ENCODE measurements at regions of chr9 and their contacts with region 1.

Region 1: DNA sequence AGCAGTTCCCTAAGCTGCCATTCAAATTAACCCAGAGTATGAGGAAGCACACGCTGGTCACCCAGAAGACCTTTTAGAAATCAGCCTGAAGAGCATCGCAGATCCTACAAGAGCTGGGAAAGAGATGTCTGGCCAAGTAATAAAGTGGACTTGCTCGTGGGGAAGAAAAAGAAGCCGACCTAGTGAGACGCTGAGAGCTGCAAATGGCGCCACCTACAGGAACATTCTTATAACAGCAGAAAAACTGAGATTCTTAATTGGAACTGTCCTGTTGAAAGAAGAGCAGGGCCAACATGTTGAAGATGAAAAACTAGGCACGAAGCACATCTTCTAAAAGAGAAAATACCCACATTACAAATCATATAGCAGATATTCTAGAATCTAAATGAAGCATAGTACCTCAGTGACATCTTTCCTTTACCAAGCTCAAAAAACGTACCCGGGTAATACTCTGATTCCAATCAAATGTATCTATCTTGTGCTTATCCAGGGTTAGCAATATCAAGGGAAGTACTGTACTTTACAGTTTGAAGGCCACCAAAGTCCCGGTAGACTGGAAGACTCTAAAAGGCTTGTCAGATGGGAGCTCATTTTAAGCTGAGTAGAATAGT is 3.9 kb upstream of the GNAQ start:
- DNase-seq: peak; percentile 18 to 89 (median 40)
- ATAC-seq: no peak
- H3K4me3 ChIP-seq: no peak overlapping the region
- H3K4me3 Mint-ChIP-seq: peak overlapping the region; percentile 45
- H3K27ac ChIP-seq: no peak overlapping the region
- H3K27ac Mint-ChIP-seq: peak overlapping the region; percentile 88
- H3K4me1 ChIP-seq: peaks cover 23% of the 10 kb centered on the region
- H3K4me1 Mint-ChIP-seq: peaks cover 36% of the 10 kb centered on the region
- H3K27me3 ChIP-seq: no peaks in the 10 kb centered on the region
- H3K27me3 Mint-ChIP-seq: no peaks in the 10 kb centered on the region
- CTCF ChIP-seq: peak; percentile 90

Region 2: DNA sequence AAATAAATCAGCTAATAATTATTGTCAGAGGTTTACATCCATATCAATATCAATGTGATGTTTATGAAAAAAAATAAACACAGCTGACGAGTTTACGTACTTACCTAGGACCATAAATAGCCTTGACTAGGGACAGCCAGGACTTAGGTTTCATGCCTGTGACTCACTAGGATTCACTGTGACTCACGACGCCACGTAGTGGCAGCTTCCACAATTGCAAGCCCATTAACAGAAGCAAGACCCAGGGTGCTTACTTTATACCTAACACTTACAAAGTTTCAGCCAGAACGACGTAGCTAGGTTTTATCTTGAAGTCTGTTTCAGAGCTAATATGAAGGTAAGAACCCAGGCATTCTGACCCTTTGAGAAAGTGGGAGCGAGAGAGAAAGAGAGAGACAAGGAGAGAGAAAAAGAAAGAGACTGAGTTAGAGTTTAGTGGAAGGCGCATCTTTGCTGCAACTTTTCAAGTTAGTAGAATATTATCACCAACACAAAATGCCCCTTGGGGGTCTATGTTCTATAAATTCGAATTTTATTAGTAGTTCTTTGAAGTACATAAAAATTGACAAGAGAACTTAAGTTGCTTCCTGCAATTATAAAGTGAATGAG is 578.6 kb before region 1 on chr9:
- CTCF ChIA-PET with region 1: interaction called, 4 read pairs
- POLR2A ChIA-PET with region 1: no interaction called
- intact Hi-C with region 1: loop called (anchors 5 kb)
- DNase-seq: peak; percentile 62 to 86 (median 76)
- ATAC-seq: peak; percentile 81
- H3K4me3 ChIP-seq: no peak overlapping the region
- H3K4me3 Mint-ChIP-seq: no peak overlapping the region
- H3K27ac ChIP-seq: no peak overlapping the region
- H3K27ac Mint-ChIP-seq: no peak overlapping the region
- H3K4me1 ChIP-seq: peaks cover 8% of the 10 kb centered on the region
- H3K4me1 Mint-ChIP-seq: peaks cover 29% of the 10 kb centered on the region
- H3K27me3 ChIP-seq: no peaks in the 10 kb centered on the region
- H3K27me3 Mint-ChIP-seq: no peaks in the 10 kb centered on the region
- CTCF ChIP-seq: peak; percentile 80

Region 3: DNA sequence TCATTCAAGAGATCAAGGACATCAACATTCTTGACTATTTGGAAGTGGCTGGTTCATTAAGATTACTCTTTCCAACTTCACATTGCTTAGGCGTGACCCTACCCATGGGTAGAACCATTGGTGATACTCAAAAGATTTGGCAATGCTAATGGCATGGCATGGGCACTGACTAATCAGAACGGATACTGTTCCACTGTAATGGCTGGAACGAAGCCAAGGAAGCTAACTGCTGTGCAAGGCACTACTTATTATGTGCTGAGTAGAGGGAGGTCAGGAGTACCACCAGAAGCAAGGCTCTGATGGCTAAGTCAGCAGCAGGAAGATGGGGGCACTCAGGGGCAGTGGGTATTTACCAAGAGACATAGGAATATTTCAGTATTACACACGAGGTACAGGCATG is 419.3 kb before region 1 on chr9:
- CTCF ChIA-PET with region 1: no interaction called
- POLR2A ChIA-PET with region 1: no interaction called
- intact Hi-C with region 1: no loop called
- DNase-seq: no peak
- ATAC-seq: no peak
- H3K4me3 ChIP-seq: no peak overlapping the region
- H3K4me3 Mint-ChIP-seq: no peak overlapping the region
- H3K27ac ChIP-seq: no peak overlapping the region
- H3K27ac Mint-ChIP-seq: no peak overlapping the region
- H3K4me1 ChIP-seq: no peaks in the 10 kb centered on the region
- H3K4me1 Mint-ChIP-seq: no peaks in the 10 kb centered on the region
- H3K27me3 ChIP-seq: no peaks in the 10 kb centered on the region
- H3K27me3 Mint-ChIP-seq: no peaks in the 10 kb centered on the region
- CTCF ChIP-seq: no peak

Region 4: GRCh38 chr9:77841739-77842386 is 193.6 kb before region 1 on chr9:
- CTCF ChIA-PET with region 1: interaction called, 8 read pairs
- POLR2A ChIA-PET with region 1: interaction called, 4 read pairs
- intact Hi-C with region 1: loop called (anchors 1 to 2 kb)
- DNase-seq: peak in 2 of 14 experiments; percentile 8 to 33
- ATAC-seq: no peak
- H3K4me3 ChIP-seq: no peak overlapping the region
- H3K4me3 Mint-ChIP-seq: no peak overlapping the region
- H3K27ac ChIP-seq: no peak overlapping the region
- H3K27ac Mint-ChIP-seq: peak overlapping the region; percentile 11
- H3K4me1 ChIP-seq: no peaks in the 10 kb centered on the region
- H3K4me1 Mint-ChIP-seq: peaks cover 21% of the 10 kb centered on the region
- H3K27me3 ChIP-seq: no peaks in the 10 kb centered on the region
- H3K27me3 Mint-ChIP-seq: no peaks in the 10 kb centered on the region
- CTCF ChIP-seq: peak; percentile 36

Region 5: GRCh38 chr9:77977210-77977611 is 58.3 kb before region 1 on chr9:
- CTCF ChIA-PET with region 1: interaction called, 22 read pairs
- POLR2A ChIA-PET with region 1: interaction called, 11 read pairs
- intact Hi-C with region 1: loop called (anchors 1 to 2 kb)
- DNase-seq: peak; percentile 9 to 79 (median 43)
- ATAC-seq: peak; percentile 65
- H3K4me3 ChIP-seq: no peak overlapping the region
- H3K4me3 Mint-ChIP-seq: peak overlapping the region; percentile 54
- H3K27ac ChIP-seq: no peak overlapping the region
- H3K27ac Mint-ChIP-seq: peak overlapping the region; percentile 40
- H3K4me1 ChIP-seq: peaks cover 37% of the 10 kb centered on the region
- H3K4me1 Mint-ChIP-seq: peaks cover 69% of the 10 kb centered on the region
- H3K27me3 ChIP-seq: no peaks in the 10 kb centered on the region
- H3K27me3 Mint-ChIP-seq: no peaks in the 10 kb centered on the region
- CTCF ChIP-seq: peak; percentile 44

Region 6: GRCh38 chr9:78004478-78005229 is 30.8 kb before region 1 on chr9:
- CTCF ChIA-PET with region 1: interaction called, 11 read pairs
- POLR2A ChIA-PET with region 1: interaction called, 3 read pairs
- intact Hi-C with region 1: loop called in 1 of 2 experiments (anchors 2 kb)
- DNase-seq: peak in 3 of 14 experiments; percentile 21 to 44 (median 37)
- ATAC-seq: no peak
- H3K4me3 ChIP-seq: no peak overlapping the region
- H3K4me3 Mint-ChIP-seq: no peak overlapping the region
- H3K27ac ChIP-seq: no peak overlapping the region
- H3K27ac Mint-ChIP-seq: no peak overlapping the region
- H3K4me1 ChIP-seq: peaks cover 19% of the 10 kb centered on the region
- H3K4me1 Mint-ChIP-seq: peaks cover 73% of the 10 kb centered on the region
- H3K27me3 ChIP-seq: no peaks in the 10 kb centered on the region
- H3K27me3 Mint-ChIP-seq: no peaks in the 10 kb centered on the region
- CTCF ChIP-seq: no peak

Region 7: DNA sequence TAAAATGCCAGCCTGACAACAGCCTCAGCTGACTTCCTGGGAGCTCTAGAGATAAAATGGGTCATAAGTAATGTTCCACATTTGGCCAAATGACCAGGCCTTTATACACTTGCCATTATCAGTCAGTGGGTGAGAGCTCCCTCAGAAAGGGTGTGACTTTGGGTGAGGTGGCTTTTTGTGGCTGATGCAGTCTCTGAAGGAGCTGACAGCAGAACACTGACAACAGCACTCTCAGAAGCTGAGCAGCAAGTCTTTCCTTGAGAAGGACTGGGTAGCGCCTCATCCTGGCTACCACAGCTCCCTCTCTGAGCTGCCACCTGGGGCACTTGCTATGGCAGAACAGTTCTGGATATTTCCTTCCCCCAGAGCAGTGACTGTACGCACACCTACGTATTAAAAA is 18.1 kb after region 1 on chr9:
- CTCF ChIA-PET with region 1: interaction called, 11 read pairs
- POLR2A ChIA-PET with region 1: interaction called, 4 read pairs
- intact Hi-C with region 1: no loop called
- DNase-seq: no peak
- ATAC-seq: no peak
- H3K4me3 ChIP-seq: no peak overlapping the region
- H3K4me3 Mint-ChIP-seq: no peak overlapping the region
- H3K27ac ChIP-seq: no peak overlapping the region
- H3K27ac Mint-ChIP-seq: no peak overlapping the region
- H3K4me1 ChIP-seq: peaks cover 18% of the 10 kb centered on the region
- H3K4me1 Mint-ChIP-seq: peaks cover 30% of the 10 kb centered on the region
- H3K27me3 ChIP-seq: no peaks in the 10 kb centered on the region
- H3K27me3 Mint-ChIP-seq: no peaks in the 10 kb centered on the region
- CTCF ChIP-seq: no peak

Region 8: GRCh38 chr9:78213712-78214111 is 178.2 kb after region 1 on chr9:
- CTCF ChIA-PET with region 1: no interaction called
- POLR2A ChIA-PET with region 1: interaction called, 9 read pairs
- intact Hi-C with region 1: loop called (anchors 1 to 5 kb)
- DNase-seq: peak in 3 of 14 experiments; percentile 61 to 62 (median 62)
- ATAC-seq: peak; percentile 73
- H3K4me3 ChIP-seq: no peak overlapping the region
- H3K4me3 Mint-ChIP-seq: no peak overlapping the region
- H3K27ac ChIP-seq: no peak overlapping the region
- H3K27ac Mint-ChIP-seq: no peak overlapping the region
- H3K4me1 ChIP-seq: peaks cover 26% of the 10 kb centered on the region
- H3K4me1 Mint-ChIP-seq: peaks cover 47% of the 10 kb centered on the region
- H3K27me3 ChIP-seq: no peaks in the 10 kb centered on the region
- H3K27me3 Mint-ChIP-seq: no peaks in the 10 kb centered on the region
- CTCF ChIP-seq: peak; percentile 66